ENCODE measurements at regions of chr1 and their contacts with region 1.

Region 1: DNA sequence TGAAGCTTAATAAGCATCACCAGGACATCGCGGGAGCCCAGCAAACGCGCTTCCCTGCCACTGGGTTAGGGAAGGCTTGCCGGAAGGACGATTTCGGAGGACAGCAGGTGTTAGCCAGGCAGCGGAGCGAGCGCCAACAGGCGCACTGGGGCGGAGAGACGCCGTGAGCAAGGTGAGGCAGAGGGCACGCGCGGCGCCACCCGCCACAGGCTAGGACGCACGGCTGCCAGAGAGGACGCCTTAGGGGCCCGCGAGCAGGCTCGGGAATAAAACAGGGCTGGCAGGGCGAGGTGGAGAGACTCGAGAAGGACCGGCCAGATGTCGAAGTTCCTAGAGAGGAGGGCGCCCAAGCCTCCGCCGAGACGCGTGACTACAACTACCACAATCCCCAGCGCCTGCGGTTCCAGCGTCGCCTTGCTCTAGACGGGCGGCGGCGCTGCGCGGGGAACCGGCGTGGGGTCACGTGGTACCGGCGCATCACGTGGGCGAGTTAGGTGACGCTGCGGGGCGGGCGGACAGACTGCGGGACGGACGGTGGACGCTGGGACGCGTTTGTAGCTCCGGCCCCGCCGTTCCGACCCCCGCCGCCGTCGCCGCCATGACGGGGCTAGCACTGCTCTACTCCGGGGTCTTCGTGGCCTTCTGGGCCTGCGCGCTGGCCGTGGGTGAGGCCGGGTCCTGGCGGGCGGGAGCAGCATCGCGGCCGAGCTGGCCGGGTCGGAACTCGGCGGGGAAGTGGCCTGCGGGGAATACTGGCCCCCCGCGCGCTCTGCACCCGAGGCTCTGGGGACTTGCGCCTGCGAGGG is at the start of gene ATP6V0B:
- DNase-seq: peak; percentile 94
- H3K4me3 Mint-ChIP-seq: peak within 1 kb of the TSS; percentile 85
- H3K27ac Mint-ChIP-seq: peak within 1 kb of the TSS; percentile 89
- H3K4me1 Mint-ChIP-seq: peaks cover 60% of the 10 kb centered on the region
- H3K27me3 Mint-ChIP-seq: peaks cover 1% of the 10 kb centered on the region
- total RNA-seq, gene ATP6V0B: 187 and 195 TPM in 2 replicates

Region 2: DNA sequence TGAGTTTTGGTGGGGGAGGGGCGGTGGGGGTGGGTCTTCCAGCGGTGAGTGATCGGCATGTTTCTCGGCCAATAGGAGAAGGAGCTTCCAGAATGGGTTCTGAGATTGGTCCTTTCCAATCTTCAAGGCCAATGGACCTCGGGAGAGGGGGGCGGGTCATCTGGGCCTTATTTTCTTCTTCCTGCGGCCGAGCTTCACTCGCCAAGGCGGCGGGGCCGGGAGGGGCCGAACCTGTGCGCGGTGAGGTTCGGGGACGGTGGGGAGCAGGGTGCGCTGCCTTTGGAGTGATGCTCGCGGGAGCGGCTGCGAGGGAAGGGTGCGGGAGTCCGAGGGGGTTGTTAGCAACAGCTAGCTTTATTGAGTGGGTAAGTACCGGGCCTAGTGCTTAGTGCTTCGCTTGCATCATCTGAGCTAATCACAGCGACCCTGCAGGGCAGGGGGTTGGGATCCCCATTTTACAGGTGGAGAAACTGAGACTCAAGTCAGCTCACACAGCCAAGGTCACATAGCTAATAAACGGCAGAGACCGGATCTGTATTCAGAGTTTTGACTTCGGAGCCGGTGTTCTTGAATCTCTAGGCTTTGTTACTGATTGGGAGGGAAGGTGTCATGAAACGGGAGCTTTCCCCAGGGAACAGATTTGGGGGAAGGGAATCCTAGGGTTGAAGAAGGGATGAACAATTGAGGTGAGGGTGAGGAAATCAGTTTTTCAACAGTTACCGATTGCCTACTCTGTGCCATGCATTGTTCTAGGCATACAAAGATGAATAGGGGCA is 324.1 kb before region 1 on chr1:
- intact Hi-C with region 1: loop called (anchors 1 kb)
- DNase-seq: peak; percentile 89
- H3K4me3 Mint-ChIP-seq: peak overlapping the region; percentile 98
- H3K27ac Mint-ChIP-seq: peak overlapping the region; percentile 98
- H3K4me1 Mint-ChIP-seq: peaks cover 27% of the 10 kb centered on the region
- H3K27me3 Mint-ChIP-seq: peaks cover under 1% of the 10 kb centered on the region

Region 3: DNA sequence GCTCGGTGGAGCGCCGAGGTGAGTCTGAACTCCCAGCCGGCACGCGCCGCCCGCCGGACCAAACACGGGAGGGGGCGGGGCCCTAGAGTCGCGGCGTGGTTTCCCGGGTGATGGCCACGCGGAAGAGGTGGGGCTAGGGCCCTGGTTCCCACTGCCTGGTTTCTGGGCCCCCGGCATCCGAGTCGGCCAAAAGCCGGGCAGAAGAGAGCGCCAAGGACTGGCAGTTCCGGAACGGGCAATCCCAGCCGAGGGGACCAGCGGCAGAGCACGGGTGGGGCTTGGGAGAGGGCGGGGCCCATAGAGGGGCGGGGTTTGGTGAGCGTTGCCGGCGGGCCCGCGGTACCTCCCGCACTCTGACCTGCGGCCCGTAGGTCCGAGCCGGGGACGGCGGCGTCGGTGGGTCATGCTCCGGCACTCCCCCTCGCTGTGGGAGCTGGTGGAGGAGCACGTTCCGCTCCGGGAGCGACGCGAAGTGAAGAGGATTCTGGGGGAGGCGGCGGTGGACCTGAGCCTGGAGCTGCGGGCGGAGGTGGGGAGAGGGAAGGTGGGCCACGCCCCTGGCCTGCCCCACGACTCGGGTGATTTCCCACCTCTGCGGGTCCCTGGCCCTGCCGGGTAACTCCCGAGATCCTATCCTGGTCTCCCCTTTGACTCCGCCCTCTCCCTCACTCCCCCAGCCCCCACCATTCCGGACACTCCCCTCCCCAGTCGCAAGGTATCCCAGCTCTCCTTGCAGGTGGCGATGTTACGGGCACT is 17.0 kb after region 1 on chr1 and contains the start of gene CCDC24:
- intact Hi-C with region 1: loop called (anchors 1 kb)
- DNase-seq: peak; percentile 74
- H3K4me3 Mint-ChIP-seq: peak within 1 kb of the TSS; percentile 91
- H3K27ac Mint-ChIP-seq: peak within 1 kb of the TSS; percentile 82
- H3K4me1 Mint-ChIP-seq: peaks cover 13% of the 10 kb centered on the region
- H3K27me3 Mint-ChIP-seq: no peaks in the 10 kb centered on the region
- total RNA-seq, gene CCDC24: 2.7 TPM in 2 replicates

Region 4: GRCh38 chr1:44029906-44030604 is 55.4 kb after region 1 on chr1:
- intact Hi-C with region 1: loop called (anchors 1 kb)
- DNase-seq: peak; percentile 86
- H3K4me3 Mint-ChIP-seq: peak overlapping the region; percentile 90
- H3K27ac Mint-ChIP-seq: peak overlapping the region; percentile 92
- H3K4me1 Mint-ChIP-seq: peaks cover 30% of the 10 kb centered on the region
- H3K27me3 Mint-ChIP-seq: peaks cover 2% of the 10 kb centered on the region

Region 5: DNA sequence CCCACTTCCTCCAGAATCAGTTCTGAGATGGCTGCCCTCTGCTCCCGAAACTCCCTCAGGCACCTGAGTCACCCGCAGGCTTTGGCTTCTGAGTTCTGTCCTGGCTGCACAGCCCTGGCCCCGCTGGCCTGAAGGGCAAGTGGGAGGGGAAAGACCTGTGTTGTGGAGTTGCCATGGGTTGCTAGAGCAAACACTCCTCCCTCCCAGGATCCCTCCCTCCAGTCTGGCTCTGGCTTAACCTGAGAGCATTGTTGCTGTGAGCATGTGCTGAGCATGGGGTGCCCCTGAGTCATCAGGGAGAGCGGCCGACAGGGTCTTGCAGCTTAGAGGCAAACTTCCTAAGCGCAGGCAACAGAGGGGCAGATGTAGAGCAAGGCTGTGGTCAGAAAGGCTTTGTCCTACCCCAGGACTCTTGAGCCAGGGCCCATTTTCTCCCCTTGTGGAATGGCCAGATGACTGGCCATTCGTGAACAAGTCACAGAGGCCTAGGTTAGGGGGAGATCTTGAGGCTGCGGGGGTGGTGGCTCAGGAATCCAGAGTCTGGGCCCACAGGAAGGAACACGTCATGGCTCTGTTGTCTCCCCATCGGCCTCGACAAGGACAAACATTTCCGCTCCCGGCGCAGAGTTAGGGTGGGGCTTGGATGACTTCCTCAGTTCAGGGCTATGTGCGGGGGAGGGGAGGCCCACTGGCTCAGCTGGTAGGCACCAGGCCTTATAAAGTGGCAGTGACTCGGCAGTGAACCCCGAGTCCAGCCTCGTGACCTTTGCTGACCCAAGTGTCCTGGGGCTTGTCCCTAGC is 832.8 kb after region 1 on chr1 and contains the start of gene DYNLT4:
- intact Hi-C with region 1: loop called (anchors 5 kb)
- DNase-seq: peak; percentile 84
- H3K4me3 Mint-ChIP-seq: peak within 1 kb of the TSS; percentile 68
- H3K27ac Mint-ChIP-seq: peak within 1 kb of the TSS; percentile 99
- H3K4me1 Mint-ChIP-seq: peaks cover 88% of the 10 kb centered on the region
- H3K27me3 Mint-ChIP-seq: no peaks in the 10 kb centered on the region
- total RNA-seq, gene DYNLT4: 0.44 TPM in 1 of 2 replicates, not detected in the other